Activated CD8-positive, alpha-beta T cell treated with anti-CD3 and anti-CD28 coated beads, Interleukin-2, amount 10 ng/mL, durations not matched to agents 7 days and 5 days (primary cell): ENCODE measurements at regions of chr15 and their contacts with region 1.

Region 1: GRCh38 chr15:58770857-58771620 is at the start of gene MINDY2:
- DNase-seq: peak; percentile 97
- ATAC-seq: peak; percentile 99
- H3K4me3 Mint-ChIP-seq: no peak within 1 kb of the TSS
- H3K27ac Mint-ChIP-seq: peak within 1 kb of the TSS; percentile 88
- H3K4me1 Mint-ChIP-seq: peaks cover 14% of the 10 kb centered on the region
- H3K27me3 Mint-ChIP-seq: no peaks in the 10 kb centered on the region
- total RNA-seq, gene MINDY2: 14.9 TPM

Region 2: DNA sequence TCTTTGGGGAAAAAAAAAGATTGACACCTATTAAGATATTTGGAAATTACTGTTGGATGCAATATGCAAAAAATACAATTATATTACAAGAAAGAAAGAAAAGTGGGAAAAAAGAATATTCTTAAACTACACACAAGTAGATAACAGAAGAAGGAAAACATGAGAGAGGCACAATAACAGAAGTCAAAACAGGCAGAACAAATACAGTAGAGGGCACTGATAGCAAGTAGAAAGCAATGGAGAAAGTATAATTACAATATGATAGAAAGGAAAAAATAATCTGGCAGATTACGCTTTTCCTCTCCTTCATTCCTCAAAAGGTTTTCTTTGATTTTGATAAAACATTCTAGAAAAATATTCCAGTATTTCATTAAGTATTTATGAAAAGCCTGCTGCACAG is 93.6 kb before region 1 on chr15:
- CTCF ChIA-PET with region 1: interaction called, 11 read pairs
- POLR2A ChIA-PET with region 1: no interaction called
- DNase-seq: no peak
- ATAC-seq: no peak
- H3K4me3 Mint-ChIP-seq: no peak overlapping the region
- H3K27ac Mint-ChIP-seq: no peak overlapping the region
- H3K4me1 Mint-ChIP-seq: peaks cover 6% of the 10 kb centered on the region
- H3K27me3 Mint-ChIP-seq: no peaks in the 10 kb centered on the region

Region 3: GRCh38 chr15:58749532-58750337 is 21.3 kb before region 1 on chr15 and contains the start of gene ADAM10:
- CTCF ChIA-PET with region 1: interaction called, 32 read pairs
- POLR2A ChIA-PET with region 1: interaction called, 28 read pairs
- DNase-seq: peak; percentile 99
- ATAC-seq: peak; percentile 92
- H3K4me3 Mint-ChIP-seq: peak within 1 kb of the TSS; percentile 100
- H3K27ac Mint-ChIP-seq: peak within 1 kb of the TSS; percentile 96
- H3K4me1 Mint-ChIP-seq: peaks cover 34% of the 10 kb centered on the region
- H3K27me3 Mint-ChIP-seq: no peaks in the 10 kb centered on the region
- total RNA-seq, gene ADAM10: 133 to 135 TPM

Region 4: GRCh38 chr15:58761010-58761388 is 10.0 kb before region 1 on chr15:
- CTCF ChIA-PET with region 1: interaction called, 18 read pairs
- POLR2A ChIA-PET with region 1: interaction called, 9 read pairs
- DNase-seq: peak; percentile 33
- ATAC-seq: no peak
- H3K4me3 Mint-ChIP-seq: no peak overlapping the region
- H3K27ac Mint-ChIP-seq: no peak overlapping the region
- H3K4me1 Mint-ChIP-seq: peaks cover 6% of the 10 kb centered on the region
- H3K27me3 Mint-ChIP-seq: peaks cover 2% of the 10 kb centered on the region